Transverse colon (tissue), 4 donors: ENCODE measurements at regions of chr14 and their contacts with region 1.

Region 1: GRCh38 chr14:100747021-100747586 is 20.4 kb downstream of the DLK1 start:
- DNase-seq: no peak
- H3K4me3 ChIP-seq: no peak overlapping the region
- H3K27ac ChIP-seq: no peak overlapping the region
- H3K4me1 ChIP-seq: no peaks in the 10 kb centered on the region
- H3K27me3 ChIP-seq: no peaks in the 10 kb centered on the region
- CTCF ChIP-seq: no peak
- EP300 ChIP-seq: no peak
- POLR2A ChIP-seq: no peak

Region 2: DNA sequence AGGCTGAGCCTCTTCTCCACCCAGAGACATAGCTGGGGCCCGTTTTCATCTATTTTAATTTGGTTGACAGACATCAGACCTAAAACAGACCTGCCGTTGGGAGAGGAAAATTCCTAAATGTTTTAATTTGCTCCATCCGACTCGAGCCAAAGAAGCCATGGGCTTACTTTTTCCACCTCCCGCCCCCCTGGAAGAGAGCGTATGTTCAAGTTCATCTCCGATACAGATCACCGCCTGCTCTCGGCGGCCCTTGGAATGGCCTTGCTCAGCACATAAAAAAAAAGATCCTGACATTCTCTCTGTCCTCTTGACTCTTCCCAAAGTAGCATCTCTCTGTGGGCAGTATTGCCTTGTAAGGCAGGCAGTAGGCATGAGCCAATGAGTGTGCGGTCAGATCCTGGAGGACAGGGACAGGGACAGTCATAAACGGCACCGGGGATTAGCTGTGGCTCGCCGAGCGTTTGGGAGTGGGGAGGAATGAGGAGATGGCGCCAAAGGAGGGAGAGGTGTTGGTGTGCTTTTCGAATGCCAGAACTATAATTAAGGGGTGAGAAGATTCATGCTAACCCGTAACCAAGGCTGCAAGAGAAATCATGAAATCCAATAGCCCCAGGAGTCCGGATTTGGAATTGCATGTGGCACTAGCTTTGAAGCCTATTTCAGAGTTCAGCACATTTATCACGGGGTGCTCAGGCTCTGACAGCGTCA is 30.9 kb after region 1 on chr14:
- in situ Hi-C with region 1: no loop called
- intact Hi-C with region 1: loop called (anchors 1 kb)
- DNase-seq: no peak
- H3K4me3 ChIP-seq: no peak overlapping the region
- H3K27ac ChIP-seq: no peak overlapping the region
- H3K4me1 ChIP-seq: no peaks in the 10 kb centered on the region
- H3K27me3 ChIP-seq: no peaks in the 10 kb centered on the region
- CTCF ChIP-seq: no peak
- EP300 ChIP-seq: no peak
- POLR2A ChIP-seq: no peak

Region 3: GRCh38 chr14:100850841-100851585 is 103.9 kb after region 1 on chr14:
- in situ Hi-C with region 1: no loop called
- intact Hi-C with region 1: no loop called
- DNase-seq: peak; percentile 92
- H3K4me3 ChIP-seq: no peak overlapping the region
- H3K27ac ChIP-seq: no peak overlapping the region
- H3K4me1 ChIP-seq: peaks cover 0 to 8% (median 0%) of the 10 kb centered on the region in 4 donors
- H3K27me3 ChIP-seq: no peaks in the 10 kb centered on the region
- CTCF ChIP-seq: peak; percentile 82 to 94 (median 91)
- EP300 ChIP-seq: no peak
- POLR2A ChIP-seq: no peak